Natural killer cell (primary cell): ENCODE measurements at regions of chr13 and their contacts with region 1.

Region 1: DNA sequence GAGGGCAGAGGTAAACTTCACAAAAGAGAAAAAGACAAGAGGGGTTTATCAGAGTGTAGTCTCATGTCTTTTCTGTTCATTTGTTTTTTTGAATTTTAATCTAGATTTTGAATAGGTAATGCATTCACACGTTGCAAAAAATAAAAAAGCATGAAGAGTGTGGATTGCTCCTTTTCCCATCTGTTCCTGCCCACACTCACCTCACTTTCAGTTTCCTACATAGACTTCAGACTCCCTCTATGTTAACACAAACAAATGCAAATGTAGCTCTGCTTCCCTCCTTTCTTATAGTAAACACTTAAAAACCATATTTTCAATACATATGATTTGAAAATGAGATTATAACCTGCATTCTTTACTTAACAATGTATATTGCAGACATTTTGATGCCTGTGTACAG is 20.3 kb downstream of the TNFSF13B start:
- DNase-seq: no peak
- ATAC-seq: no peak
- H3K4me3 ChIP-seq: no peak overlapping the region
- H3K4me3 Mint-ChIP-seq: no peak overlapping the region
- H3K27ac ChIP-seq: no peak overlapping the region
- H3K27ac Mint-ChIP-seq: no peak overlapping the region
- H3K4me1 ChIP-seq: no peaks in the 10 kb centered on the region
- H3K4me1 Mint-ChIP-seq: peaks cover 5% of the 10 kb centered on the region in 2 donors
- H3K27me3 ChIP-seq: no peaks in the 10 kb centered on the region
- H3K27me3 Mint-ChIP-seq: peaks cover 0 to 2% of the 10 kb centered on the region in 2 donors
- CTCF ChIP-seq: no peak

Region 2: DNA sequence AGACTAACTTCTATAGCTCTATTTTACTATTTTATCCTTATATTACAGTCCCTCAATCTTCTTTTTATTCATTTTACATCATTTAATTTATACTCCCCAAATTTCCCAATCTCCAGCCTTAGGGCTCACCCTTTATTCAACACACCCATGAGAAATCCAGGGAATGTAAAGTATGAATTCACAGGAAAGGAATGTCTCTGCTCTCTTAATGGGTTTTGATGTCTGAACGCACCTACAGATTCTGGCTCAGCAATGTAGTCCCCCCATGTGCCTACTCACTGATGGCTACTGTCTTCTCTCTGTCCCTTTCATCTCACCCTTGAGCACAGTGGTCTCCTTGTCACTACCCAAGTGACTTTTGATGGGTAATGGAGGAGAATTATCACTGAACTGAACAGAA is 12.5 kb after region 1 on chr13:
- intact Hi-C with region 1: loop called (anchors 1 kb)
- DNase-seq: no peak
- ATAC-seq: no peak
- H3K4me3 ChIP-seq: no peak overlapping the region
- H3K4me3 Mint-ChIP-seq: no peak overlapping the region
- H3K27ac ChIP-seq: no peak overlapping the region
- H3K27ac Mint-ChIP-seq: no peak overlapping the region
- H3K4me1 ChIP-seq: no peaks in the 10 kb centered on the region
- H3K4me1 Mint-ChIP-seq: no peaks in the 10 kb centered on the region
- H3K27me3 ChIP-seq: no peaks in the 10 kb centered on the region
- H3K27me3 Mint-ChIP-seq: no peaks in the 10 kb centered on the region
- CTCF ChIP-seq: no peak